Right ventricle myocardium inferior (tissue), 1 donor: ENCODE measurements at regions of chr2 and their contacts with region 1.

Region 1: GRCh38 chr2:112481050-112481527 is 867 bp upstream of the TTL start:
- DNase-seq: peak; percentile 93
- ATAC-seq: peak; percentile 92

Region 2: GRCh38 chr2:112301171-112301584 is 179.9 kb before region 1 on chr2:
- intact Hi-C with region 1: no loop called
- DNase-seq: no peak
- ATAC-seq: no peak

Region 3: GRCh38 chr2:112332123-112332696 is 148.9 kb before region 1 on chr2:
- intact Hi-C with region 1: no loop called
- DNase-seq: no peak
- ATAC-seq: no peak

Region 4: DNA sequence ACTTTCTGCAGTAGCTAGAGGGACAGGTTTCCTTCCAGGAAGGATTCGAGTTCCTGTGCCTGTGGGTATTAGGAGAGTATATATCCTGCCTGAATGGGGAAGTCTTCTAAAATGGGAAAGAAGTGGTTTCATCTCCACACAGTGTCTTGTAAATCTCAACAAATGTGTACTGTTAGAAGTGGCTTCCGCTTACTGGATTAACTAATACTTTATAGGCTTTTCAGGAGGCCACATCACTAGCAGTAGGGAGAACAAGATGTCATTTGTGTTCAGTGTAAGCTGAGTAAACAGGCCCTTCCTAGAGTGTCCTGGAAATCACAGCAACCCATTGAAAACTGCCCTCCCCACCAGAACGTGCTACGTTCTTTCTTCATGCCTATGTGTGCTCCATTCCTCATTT is 48.7 kb after region 1 on chr2:
- intact Hi-C with region 1: no loop called
- DNase-seq: no peak
- ATAC-seq: peak; percentile 39

Region 5: DNA sequence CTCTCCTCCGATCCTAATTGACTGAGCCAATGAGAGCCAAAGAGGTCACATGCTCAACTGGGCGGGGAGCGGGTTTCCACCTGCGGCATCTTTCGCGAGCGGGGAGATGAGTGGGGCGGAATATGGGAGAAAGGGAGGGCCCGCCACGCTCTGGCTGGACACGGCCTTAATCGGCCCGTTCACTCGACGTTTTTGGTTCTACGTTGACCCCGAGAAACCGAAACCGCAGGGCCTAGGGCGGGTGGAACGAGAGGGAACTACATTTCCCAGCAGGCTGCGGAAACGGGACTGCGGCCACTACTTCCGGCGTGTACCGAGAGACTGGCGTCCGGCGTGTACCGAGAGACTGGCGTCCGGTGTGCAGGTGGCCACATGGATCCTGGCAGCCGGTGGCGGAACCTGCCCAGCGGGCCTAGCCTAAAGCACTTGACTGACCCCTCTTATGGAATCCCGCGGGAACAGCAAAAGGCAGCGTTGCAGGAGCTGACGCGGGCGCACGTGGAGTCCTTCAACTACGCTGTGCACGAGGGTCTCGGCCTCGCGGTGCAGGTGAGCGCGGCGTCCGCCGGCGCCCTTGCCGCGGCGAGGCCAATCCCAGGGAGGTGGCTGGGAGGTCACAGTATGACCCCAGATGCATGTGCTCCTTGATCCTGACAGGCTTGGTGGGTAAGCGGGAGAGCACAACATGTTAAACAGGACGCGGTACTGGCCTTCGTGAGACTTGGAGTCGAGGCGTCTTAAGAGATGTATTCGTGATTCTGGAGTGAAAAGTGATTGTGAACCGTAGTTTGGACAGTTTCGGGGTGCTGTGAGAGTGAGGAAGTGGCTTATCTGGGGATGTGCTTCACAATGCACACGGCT is 61.3 kb after region 1 on chr2 and contains the start of gene POLR1B:
- intact Hi-C with region 1: loop called (anchors 1 kb)
- DNase-seq: peak; percentile 95
- ATAC-seq: peak; percentile 94
- total RNA-seq, gene POLR1B: 9.7 TPM